ENCODE measurements at regions of chr13 and their contacts with region 1.

Region 1: GRCh38 chr13:39347926-39348901 is 254.8 kb downstream of the LHFPL6 start:
- DNase-seq: peak; percentile 69
- ATAC-seq: peak; percentile 93

Region 2: GRCh38 chr13:39306639-39307589 is 41.3 kb before region 1 on chr13:
- intact Hi-C with region 1: no loop called
- DNase-seq: no peak
- ATAC-seq: no peak

Region 3: DNA sequence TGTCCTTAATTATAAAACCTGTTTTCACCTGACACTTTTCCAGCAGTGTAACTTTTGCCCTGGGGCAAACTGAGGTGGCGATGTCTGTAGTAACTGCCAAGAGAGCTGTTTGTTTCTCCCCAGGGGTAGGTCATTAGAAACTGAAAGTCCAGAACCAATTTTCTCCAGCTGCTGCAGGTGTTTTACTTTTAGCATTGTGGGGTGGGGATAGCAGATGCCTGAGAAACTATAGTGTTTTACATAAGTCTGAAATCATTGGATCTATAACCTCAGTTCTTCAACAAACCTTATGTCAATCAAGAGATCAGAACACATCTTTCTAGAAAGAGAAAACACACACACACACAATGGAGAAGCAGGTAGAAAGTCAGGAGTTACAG is 162.1 kb after region 1 on chr13:
- intact Hi-C with region 1: loop called (anchors 10 kb)
- DNase-seq: no peak
- ATAC-seq: no peak

Region 4: GRCh38 chr13:39729156-39729555 is 380.9 kb after region 1 on chr13:
- intact Hi-C with region 1: no loop called
- DNase-seq: no peak
- ATAC-seq: no peak